KBM-7 (cell line): ENCODE measurements at regions of chr20 and their contacts with region 1.

Region 1: GRCh38 chr20:10877342-10877741 is 203.5 kb upstream of the JAG1 start:
- DNase-seq: no peak

Region 2: DNA sequence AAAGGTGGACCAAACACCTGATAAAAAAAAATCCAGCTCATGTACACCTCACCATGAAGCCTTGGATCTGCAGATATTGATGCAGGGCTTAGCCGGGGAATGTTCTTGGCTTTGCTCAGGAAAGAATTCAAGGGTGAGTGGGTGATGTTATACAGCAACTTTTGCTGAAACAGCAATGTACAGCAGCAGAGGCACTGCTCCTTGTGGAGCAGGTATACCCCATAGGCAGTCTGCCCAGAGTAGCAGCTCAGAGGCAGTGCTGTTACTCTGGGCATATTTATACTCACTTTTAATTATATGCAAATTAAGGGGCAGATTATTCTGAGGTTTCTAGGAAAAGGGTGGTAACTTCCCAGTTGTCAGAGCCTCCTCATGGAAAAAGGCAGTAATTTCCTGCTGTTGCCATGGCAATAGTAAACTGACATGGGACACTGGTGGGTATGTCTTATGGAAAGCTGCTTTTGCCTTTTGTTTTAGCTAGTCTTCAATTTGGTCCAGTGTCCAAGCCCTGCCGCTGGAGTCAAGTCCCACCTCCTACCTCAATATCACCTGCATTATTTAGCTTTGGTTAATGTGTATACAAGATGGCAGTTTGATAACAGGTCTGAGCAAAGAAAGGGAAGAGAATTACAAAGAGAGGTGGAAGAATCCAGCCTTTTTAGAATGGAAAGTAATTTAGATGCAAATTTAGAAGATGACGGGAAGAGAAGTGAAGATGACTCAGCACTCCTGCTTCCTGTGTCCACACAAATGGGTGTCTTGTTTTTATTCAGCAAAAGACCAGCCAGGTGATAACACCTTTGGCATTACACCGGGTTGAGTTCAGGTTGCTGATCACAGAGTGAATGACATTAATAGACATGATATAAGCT is 93.4 kb before region 1 on chr20:
- in situ Hi-C with region 1: loop called (anchors 25 kb)
- DNase-seq: no peak

Region 3: DNA sequence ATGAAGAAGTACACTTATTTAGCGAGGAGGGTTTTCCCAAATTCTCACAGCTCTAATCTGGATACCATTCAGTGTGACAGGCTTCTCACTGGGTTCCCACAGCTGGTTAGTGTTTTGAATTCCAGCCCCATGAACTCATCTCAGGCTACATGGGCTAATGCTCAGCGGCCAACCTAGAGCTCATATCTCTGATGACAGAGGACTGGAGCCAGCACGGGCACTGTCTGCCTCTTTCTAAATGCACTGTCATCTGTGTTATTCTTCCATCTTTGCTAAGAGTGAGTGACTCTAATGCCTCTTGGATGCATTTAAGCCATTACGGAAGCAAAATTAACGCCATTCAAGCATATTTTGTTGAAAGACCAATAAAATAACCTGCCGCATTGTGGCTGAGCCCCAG is 105.3 kb after region 1 on chr20:
- in situ Hi-C with region 1: no loop called
- DNase-seq: no peak